Vagina (tissue), 2 donors: ENCODE measurements at regions of chr13 and their contacts with region 1.

Region 1: DNA sequence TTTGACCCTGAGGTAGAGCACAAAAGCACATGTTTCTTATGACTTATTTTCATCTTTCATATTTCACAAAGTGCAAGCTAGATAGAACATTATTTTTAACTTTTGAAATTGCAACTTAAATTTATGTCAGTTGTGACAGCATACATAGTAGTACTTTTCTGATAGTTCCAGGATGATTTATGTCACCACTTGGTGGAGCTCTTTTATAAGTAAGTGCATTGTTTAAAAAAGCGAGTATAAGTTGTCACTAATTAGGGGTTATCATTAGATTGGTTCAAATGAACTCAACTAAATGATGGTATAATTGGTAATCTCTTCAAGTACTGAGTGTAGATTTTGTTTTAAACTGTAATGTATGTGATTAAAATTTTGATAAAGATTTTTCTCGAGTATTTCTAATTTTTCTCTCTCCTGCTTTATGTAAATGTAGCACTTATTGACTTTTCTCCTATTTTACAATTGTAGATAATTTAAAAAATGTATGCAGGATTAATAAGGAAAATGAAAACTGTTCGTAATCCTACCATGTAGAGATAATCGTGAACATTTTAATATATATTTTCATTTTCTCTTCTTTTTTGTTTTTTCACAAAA is 31.1 kb downstream of the RB1 start:
- DNase-seq: no peak
- H3K4me3 ChIP-seq: no peak overlapping the region
- H3K27ac ChIP-seq: no peak overlapping the region
- H3K4me1 ChIP-seq: no peaks in the 10 kb centered on the region
- H3K27me3 ChIP-seq: no peaks in the 10 kb centered on the region
- CTCF ChIP-seq: peak; percentile 27 to 61 (median 61)
- POLR2A ChIP-seq: no peak

Region 2: DNA sequence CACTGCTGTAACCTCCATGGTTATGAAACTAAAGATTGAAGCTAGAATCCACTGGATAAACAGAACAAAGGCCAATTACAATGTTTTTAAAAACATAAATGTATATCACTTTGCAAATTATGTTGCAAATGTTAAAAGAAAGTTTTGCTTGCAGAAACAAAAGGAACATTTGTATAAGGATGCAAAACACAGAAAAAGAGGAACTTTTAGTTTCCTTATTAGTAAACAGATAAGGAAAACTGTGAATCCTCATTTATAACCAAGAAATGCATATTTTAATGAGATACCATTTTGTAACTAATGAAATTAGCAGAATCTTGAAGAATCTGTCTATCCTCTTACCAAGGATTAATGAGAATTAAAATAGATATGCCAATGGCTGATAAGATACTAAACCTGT is 46.0 kb after region 1 on chr13:
- intact Hi-C with region 1: no loop called
- DNase-seq: no peak
- H3K4me3 ChIP-seq: no peak overlapping the region
- H3K27ac ChIP-seq: no peak overlapping the region
- H3K4me1 ChIP-seq: no peaks in the 10 kb centered on the region
- H3K27me3 ChIP-seq: no peaks in the 10 kb centered on the region
- CTCF ChIP-seq: no peak
- POLR2A ChIP-seq: no peak

Region 3: DNA sequence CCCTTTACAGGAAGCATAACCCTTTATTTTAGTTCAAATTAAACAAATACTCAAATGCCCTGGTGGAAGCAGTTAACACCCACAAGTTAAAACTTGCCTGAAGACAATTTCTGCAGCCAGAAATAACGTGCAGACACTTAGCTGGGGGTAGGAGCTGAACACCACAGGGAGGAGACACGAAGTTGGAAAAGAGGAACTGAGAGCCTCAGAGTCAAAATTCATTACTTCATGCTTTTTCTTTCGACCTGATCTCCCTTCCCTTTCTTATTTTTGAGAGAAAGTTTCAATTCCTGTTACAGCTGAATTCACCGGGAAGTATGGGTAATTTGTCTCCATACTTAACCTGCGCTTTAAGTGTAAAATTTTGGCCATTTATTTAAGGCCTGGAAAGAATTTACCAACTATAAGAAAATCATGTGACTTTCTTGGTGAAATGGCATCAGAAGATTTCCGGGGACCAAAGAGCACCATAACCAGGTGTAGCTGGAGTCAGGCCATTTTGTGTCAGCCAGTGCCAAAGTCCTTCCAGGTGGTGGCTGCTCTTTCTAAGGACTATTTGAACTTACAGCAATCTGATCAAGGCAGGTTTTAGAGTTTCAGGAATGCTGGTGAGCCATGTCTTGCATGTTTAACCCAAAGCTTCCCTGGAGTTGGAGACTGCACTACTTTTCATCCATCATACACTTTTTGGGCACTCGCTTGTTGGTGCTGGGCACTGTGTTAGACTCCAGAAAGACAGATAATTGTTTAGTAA is 244.7 kb after region 1 on chr13:
- intact Hi-C with region 1: loop called (anchors 10 kb)
- DNase-seq: no peak
- H3K4me3 ChIP-seq: no peak overlapping the region
- H3K27ac ChIP-seq: peak overlapping the region; percentile 38
- H3K4me1 ChIP-seq: peaks cover 13% of the 10 kb centered on the region
- H3K27me3 ChIP-seq: no peaks in the 10 kb centered on the region
- CTCF ChIP-seq: no peak
- POLR2A ChIP-seq: no peak